Posterior vena cava (tissue), 2 donors: ENCODE measurements at regions of chr14 and their contacts with region 1.

Region 1: GRCh38 chr14:99575043-99576023 is 28.7 kb downstream of the CCDC85C start:
- DNase-seq: no peak

Region 2: GRCh38 chr14:99475179-99475578 is 100.2 kb before region 1 on chr14:
- intact Hi-C with region 1: no loop called
- DNase-seq: no peak

Region 3: GRCh38 chr14:99524804-99525698 is 50.3 kb before region 1 on chr14:
- intact Hi-C with region 1: loop called in 1 of 2 experiments (anchors 10 kb)
- DNase-seq: no peak

Region 4: DNA sequence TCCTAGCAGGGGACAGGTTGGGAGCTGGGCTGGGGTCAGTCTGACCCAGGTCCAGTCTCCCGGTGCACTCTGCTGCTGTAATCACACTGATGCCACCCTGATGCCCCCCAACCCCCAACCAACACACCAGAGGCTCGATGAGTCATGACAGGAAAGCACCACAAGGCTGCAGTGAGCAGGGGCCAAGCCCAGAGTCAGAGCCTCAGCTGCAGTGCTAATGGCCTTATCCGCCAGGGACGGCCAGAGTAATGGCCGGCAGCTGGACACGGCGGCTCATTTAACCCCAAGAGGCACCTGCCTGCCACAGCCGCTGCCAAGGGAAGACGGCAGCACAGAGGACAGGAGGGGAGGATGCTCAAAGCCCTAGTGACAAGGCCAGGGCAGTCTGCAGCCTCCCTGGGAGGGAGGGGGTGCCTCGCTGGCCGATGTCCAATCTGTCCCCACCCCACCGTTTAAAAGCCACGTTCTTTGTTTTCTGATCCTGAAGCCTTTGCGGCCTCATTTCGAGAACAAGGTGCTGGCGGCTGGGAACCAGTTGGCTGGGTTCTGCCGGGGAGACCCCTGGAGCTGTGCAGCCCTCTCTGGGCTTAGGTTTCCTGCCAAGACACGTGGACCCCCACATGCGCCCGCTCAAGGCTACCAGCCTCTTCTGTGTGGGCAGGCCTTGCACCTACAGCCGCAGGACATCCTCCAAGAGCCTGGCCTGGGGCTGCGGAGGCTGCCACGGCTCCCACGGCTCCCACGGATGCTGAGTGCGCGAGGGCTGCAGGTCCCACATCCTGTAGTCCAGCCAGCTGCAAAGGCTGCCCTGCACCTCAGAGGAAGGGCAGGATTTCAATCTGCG is 15.6 kb after region 1 on chr14:
- intact Hi-C with region 1: no loop called
- DNase-seq: no peak